AG04449 (cell line): ENCODE measurements at regions of chr12 and their contacts with region 1.

Region 1: DNA sequence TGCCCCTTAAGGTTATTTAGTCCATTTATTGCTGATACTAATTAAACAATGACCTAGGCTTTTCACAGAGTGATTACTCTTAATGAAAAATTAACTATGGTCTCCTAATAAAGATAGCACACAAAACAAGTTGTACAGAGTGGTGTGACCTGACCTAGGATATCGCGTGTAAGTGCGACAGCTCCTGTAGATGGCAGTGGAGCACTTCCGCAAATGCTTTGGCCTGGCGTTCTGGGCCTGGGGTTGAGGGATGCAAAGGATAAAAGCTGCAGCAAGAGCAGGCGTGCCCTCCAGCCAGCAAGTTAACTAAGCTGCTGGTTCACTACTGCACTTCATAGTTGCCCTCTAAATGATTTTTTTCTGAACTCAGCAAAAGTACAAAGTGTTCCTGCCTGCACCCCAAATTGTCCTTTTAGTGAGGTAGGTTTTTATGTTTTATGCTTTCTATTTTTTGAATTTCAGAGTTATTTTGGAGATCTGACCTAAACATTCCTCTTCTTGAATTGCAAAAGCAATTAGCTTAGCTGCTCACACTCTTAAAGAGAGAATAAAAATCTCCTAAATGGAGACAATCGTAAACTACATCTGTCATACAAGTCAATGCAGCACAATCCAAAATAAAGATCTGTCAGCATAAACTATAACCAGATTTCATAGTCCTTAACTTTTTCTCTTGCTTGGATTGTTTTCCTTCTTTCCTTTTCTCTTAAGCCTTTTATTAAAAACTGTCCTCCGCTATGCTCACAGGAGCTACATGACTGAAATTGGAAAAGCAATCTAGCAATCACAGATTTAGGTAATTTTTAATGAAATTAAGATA is 379.6 kb downstream of the LRIG3 start:
- DNase-seq: peak; percentile 54
- H3K4me3 ChIP-seq: no peak overlapping the region
- CTCF ChIP-seq: peak; percentile 85

Region 2: DNA sequence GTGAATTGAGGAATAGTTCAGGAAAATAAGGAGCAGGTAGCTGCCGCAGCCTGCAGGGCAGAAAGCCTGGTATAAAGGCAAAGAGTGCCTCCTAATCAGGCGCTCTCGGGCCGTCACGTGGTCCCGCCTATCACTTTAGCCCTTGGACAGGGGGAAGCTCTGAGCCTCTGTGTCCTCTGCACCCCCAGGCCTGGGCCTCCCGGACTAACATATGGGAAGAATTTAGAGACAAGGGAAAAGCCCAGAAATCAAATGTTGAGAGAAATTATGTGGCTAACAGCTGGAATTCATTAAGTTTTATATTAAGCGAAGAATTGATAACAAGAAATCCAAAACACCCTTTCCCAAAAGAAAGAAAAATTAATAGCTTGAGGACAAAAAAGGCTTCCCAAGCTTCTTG is 181.6 kb before region 1 on chr12:
- CTCF ChIA-PET with region 1: interaction called, 11 read pairs
- POLR2A ChIA-PET with region 1: no interaction called
- DNase-seq: no peak
- H3K4me3 ChIP-seq: no peak overlapping the region
- CTCF ChIP-seq: no peak

Region 3: GRCh38 chr12:58554522-58555157 is 13.9 kb after region 1 on chr12:
- CTCF ChIA-PET with region 1: interaction called, 15 read pairs
- POLR2A ChIA-PET with region 1: no interaction called
- DNase-seq: no peak
- H3K4me3 ChIP-seq: no peak overlapping the region
- CTCF ChIP-seq: no peak

Region 4: DNA sequence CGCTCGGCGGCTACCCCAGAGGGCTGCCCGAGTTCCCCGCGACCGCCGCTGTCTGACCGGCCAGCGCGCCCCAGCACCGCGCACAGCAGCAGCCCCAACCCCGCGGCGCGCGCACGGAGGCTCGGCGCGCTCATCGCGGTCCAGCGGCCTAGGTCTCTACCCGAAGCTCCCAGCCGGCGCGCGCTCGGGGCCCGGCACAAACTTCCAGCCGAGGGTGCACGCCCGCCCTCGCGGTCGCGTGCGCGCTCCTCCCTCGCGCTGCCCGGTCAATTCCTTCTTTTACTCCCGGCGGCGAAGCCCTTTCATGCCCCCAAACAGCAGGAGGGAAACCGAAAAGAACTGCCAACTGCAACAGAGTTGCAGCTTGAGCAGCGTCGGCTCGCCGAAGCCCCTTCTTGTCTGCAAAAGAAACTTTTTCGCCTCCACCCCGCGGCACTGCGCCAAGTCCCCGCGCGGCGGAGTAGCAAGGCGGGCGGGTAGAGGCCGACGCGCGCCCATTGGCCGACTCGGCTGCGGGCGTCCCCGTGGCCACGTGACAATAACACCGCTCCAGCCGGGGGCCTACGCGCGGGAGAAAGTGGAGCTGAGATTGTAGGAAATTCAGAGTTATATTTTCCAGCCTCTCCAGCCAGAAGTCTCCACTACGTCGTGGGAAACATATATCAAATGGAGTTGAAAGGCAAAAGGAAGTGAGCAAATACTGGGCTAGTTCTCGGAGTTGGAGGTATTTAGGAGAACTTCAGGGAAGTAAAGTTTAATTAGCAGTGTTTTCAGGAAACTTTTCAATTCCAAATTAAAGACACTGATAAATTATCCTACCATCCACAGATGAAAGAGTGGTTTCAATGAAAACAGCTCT is 379.6 kb after region 1 on chr12 and contains the start of gene LRIG3:
- CTCF ChIA-PET with region 1: interaction called, 15 read pairs
- POLR2A ChIA-PET with region 1: interaction called, 3 read pairs
- DNase-seq: no peak
- H3K4me3 ChIP-seq: peak within 1 kb of the TSS; percentile 96
- CTCF ChIP-seq: no peak

Region 5: GRCh38 chr12:59100585-59100984 is 559.9 kb after region 1 on chr12:
- CTCF ChIA-PET with region 1: interaction called, 13 read pairs
- POLR2A ChIA-PET with region 1: no interaction called
- DNase-seq: no peak
- H3K4me3 ChIP-seq: no peak overlapping the region
- CTCF ChIP-seq: no peak

Region 6: DNA sequence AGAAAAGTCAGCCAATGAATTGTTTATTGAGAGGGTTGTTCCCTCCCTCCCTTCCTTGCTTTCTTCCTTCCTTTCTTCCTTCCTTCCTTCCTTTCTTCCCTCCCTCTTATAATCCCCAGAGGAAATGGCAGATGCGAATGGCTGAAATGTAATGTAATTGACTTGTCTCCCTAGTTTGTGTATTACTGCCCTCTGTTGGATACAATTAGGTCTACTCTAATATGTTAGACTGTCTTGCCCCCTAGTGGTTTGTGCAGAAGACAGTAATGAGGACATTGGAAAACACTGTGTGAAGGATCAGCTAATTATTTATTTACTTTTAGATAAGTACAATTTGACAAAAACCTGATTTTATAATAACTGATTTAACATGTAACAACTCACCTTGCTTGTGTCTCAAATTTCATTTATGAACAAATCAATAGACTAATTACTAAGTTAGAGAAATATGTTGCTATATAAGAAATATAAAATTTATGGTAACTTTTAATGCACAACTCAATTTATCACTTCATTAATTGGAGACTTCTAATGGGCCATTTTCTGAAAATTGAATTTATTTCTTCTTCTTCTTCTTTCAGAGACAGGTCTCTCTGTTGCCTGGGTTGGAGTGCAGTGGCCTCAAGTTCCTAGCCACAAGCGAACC is 609.4 kb after region 1 on chr12:
- CTCF ChIA-PET with region 1: interaction called, 50 read pairs
- POLR2A ChIA-PET with region 1: no interaction called
- DNase-seq: peak; percentile 38
- H3K4me3 ChIP-seq: no peak overlapping the region
- CTCF ChIP-seq: peak; percentile 83